Mammary epithelial cell (primary cell): ENCODE measurements at regions of chr11 and their contacts with region 1.

Region 1: GRCh38 chr11:40186437-40187266 is 1272.8 kb downstream of the LRRC4C start:
- DNase-seq: no peak
- H3K4me3 ChIP-seq: no peak overlapping the region
- H3K27ac ChIP-seq: no peak overlapping the region
- H3K4me1 ChIP-seq: no peaks in the 10 kb centered on the region
- H3K27me3 ChIP-seq: no peaks in the 10 kb centered on the region
- CTCF ChIP-seq: no peak

Region 2: GRCh38 chr11:40125054-40125453 is 61.6 kb before region 1 on chr11:
- CTCF ChIA-PET with region 1: no interaction called
- dilution Hi-C with region 1: no loop called
- in situ Hi-C with region 1: no loop called
- intact Hi-C with region 1: no loop called
- DNase-seq: no peak
- H3K4me3 ChIP-seq: no peak overlapping the region
- H3K27ac ChIP-seq: no peak overlapping the region
- H3K4me1 ChIP-seq: no peaks in the 10 kb centered on the region
- H3K27me3 ChIP-seq: no peaks in the 10 kb centered on the region
- CTCF ChIP-seq: no peak

Region 3: GRCh38 chr11:40227730-40228129 is 41.1 kb after region 1 on chr11:
- CTCF ChIA-PET with region 1: no interaction called
- dilution Hi-C with region 1: loop called (anchors 5 kb)
- in situ Hi-C with region 1: no loop called
- intact Hi-C with region 1: no loop called
- DNase-seq: no peak
- H3K4me3 ChIP-seq: no peak overlapping the region
- H3K27ac ChIP-seq: no peak overlapping the region
- H3K4me1 ChIP-seq: no peaks in the 10 kb centered on the region
- H3K27me3 ChIP-seq: no peaks in the 10 kb centered on the region
- CTCF ChIP-seq: no peak